Heart left ventricle (tissue), 16 donors: ENCODE measurements at regions of chr7 and their contacts with region 1.

Region 1: GRCh38 chr7:628377-628763 is 98.1 kb upstream of the DNAAF5 start:
- DNase-seq: no peak
- ATAC-seq: peak in 1 of 4 donors; percentile 41
- H3K4me3 ChIP-seq: no peak overlapping the region
- H3K27ac ChIP-seq: no peak overlapping the region
- H3K4me1 ChIP-seq: no peaks in the 10 kb centered on the region
- H3K27me3 ChIP-seq: no peaks in the 10 kb centered on the region
- CTCF ChIP-seq: no peak
- POLR2A ChIP-seq: no peak

Region 2: DNA sequence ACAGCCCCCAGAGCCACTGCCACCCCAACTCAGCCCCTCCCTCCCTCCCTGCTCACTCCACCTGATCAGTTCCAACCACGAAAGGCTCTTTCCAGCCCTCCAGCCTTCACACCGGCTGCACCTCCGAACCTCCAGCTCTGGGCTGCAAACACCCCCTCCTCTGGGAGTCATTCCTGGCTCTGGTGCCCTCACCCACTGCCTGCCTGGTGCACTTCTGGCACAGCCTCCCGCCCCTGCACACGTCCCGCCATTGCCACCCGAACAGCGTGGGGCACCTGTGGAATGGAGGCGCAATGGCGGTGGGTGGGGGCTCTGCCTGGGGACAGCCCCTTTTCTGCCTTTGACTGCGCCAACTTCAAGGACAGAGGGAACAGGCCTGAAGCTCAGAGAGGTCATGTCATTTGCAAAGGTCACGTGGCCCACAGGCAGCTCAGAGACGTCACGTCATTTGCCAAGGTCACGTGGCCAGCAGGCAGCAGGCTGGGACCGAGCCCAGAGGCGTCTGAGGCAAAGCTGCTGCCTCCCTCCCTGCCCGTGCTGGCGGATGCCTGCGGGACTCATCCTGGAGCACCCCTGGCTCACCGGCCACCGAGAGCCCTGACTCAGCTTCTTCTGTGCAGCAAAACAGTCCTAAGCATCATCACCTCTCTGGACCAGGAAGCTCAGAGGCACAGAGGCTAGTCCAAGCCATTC is 22.1 kb after region 1 on chr7:
- intact Hi-C with region 1: loop called in 1 of 10 experiments (anchors 2 kb)
- DNase-seq: peak; percentile 78 to 92 (median 85)
- ATAC-seq: peak; percentile 92 to 98 (median 97)
- H3K4me3 ChIP-seq: peak overlapping the region in 6 of 12 donors; percentile 12 to 28 (median 25)
- H3K27ac ChIP-seq: peak overlapping the region; percentile 18 to 94 (median 78)
- H3K4me1 ChIP-seq: peaks cover 0 to 14% (median 2%) of the 10 kb centered on the region in 12 donors
- H3K27me3 ChIP-seq: no peaks in the 10 kb centered on the region
- CTCF ChIP-seq: no peak
- POLR2A ChIP-seq: no peak